Right ventricle myocardium superior (tissue), 1 donor: ENCODE measurements at regions of chr3 and their contacts with region 1.

Region 1: GRCh38 chr3:71641674-71642073 is 58.1 kb upstream of the FOXP1 start:
- DNase-seq: no peak
- ATAC-seq: no peak

Region 2: DNA sequence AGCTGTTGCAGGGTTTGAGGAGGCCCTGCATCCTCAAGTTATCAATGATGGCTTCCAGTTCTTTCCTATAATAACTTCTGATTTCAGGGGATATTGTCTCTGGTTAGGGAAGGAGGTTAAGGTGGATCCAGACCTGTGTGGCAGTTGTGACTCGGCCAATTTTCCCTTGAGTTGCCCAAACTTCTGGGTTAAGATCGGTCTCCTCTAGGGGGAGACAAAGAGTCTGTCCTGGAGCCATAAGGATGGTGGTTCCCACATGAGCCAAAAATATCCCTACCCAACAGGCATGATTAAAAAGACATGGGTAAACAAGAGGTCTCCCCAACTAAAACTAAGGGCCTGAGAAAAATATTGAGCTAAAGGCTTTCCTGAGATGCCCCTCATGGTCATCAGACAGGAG is 1101.8 kb before region 1 on chr3:
- intact Hi-C with region 1: loop called (anchors 10 kb)
- DNase-seq: no peak
- ATAC-seq: no peak

Region 3: GRCh38 chr3:71684754-71685386 is 43.2 kb after region 1 on chr3:
- intact Hi-C with region 1: no loop called
- DNase-seq: no peak
- ATAC-seq: peak; percentile 22

Region 4: DNA sequence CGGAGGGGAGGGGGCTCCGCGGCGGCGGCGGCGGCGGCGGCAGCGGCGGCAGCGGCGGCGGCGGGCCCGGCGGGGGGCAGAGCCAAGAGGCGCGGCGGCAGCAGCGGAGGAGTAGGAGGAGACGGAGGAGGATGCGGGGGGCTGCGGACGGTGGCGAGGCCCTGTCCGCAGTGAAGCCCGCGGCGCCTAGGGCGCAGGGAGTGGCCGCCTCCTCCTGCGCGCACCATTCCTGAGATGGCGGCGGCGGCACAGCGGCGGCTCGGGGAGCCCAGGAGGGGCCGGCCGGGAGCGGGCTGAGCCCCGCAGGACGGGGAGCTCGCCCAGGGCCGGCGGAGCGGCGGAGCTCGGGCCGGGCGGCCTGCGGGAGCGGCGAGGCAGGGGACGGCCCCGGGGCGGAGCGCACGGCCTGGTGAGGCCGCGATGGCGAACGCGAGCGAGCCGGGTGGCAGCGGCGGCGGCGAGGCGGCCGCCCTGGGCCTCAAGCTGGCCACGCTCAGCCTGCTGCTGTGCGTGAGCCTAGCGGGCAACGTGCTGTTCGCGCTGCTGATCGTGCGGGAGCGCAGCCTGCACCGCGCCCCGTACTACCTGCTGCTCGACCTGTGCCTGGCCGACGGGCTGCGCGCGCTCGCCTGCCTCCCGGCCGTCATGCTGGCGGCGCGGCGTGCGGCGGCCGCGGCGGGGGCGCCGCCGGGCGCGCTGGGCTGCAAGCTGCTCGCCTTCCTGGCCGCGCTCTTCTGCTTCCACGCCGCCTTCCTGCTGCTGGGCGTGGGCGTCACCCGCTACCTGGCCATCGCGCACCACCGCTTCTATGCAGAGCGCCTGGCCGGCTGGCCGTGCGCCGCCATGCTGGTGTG is 112.2 kb after region 1 on chr3 and contains the start of gene GPR27:
- intact Hi-C with region 1: no loop called
- DNase-seq: peak; percentile 49
- ATAC-seq: peak; percentile 79
- total RNA-seq, gene GPR27: 3.7 TPM